ENCODE measurements at regions of chr1 and their contacts with region 1.

Region 1: DNA sequence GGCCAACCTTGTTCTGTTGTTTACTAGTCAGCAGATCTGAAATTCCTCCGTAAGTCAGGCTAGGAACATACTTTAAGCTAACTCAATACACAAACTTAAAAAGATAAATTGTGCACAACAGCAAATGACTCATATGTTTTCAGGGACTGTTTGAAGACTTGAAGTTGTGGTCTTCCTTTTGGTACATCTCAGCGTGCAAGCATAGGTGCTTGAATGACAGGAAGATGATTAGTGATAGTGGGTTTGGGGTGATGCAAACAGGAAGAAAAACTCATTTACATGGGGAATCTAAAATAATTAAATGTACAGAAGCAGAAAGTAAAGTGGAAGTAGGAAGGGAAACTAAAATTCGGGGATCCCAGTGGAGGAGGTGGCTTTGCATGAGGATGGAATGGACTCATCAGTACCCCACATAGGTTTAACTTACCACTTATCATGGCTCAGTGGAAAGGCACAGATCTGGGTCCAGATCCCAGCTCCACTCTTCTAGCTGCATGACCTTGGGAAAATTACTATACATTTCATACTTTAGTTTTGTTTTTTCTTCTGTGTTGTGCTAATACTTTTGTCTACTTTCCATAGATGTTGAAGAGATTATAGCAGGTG is 122.3 kb downstream of the XCL2 start:
- DNase-seq: peak; percentile 76
- H3K4me3 Mint-ChIP-seq: peak overlapping the region; percentile 44
- H3K27ac Mint-ChIP-seq: peak overlapping the region; percentile 52
- H3K4me1 Mint-ChIP-seq: peaks cover 15% of the 10 kb centered on the region
- H3K27me3 Mint-ChIP-seq: peaks cover 3% of the 10 kb centered on the region

Region 2: DNA sequence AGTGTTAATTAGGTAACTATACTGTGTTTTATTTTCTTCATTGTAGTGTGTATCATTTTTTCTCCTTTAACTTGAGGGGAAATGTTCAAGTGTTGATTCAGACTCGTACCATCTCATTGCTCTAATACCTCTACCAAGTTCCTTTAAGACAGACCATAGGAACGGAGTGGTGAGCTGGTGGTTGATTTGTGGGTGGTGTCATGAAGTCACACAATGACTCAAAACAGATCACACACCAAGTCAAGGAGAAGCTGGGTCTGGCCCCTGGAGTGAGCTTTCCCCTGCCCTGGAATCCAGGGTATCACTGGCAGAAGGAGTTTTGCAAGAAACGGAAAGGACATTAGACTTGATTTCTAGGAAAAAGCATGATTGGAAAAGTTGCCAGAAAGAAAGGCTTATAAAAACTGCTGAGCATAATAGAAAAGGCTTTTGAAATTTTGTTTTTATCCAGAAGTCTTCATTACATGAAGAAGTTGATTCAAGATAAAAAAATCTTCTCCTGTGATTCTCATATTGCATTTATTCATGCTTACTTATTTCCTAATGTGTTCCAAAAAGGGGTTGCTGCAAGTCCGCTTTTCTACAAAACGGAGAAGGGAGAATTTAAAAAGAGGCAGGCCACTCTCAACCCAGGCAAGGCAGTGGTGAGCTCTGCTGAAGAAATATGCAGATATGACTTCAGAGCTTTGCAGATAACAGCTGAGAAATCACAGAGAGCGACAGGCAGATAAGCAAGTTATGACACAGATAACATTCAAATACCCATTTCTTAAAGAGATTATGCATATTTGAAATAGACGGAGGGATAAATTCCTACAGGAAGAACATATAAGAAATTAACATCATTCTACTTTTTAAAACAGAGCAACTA is 61.1 kb before region 1 on chr1:
- intact Hi-C with region 1: loop called (anchors 5 kb)
- DNase-seq: peak; percentile 75
- H3K4me3 Mint-ChIP-seq: peak overlapping the region; percentile 3
- H3K27ac Mint-ChIP-seq: peak overlapping the region; percentile 46
- H3K4me1 Mint-ChIP-seq: peaks cover 29% of the 10 kb centered on the region
- H3K27me3 Mint-ChIP-seq: peaks cover 12% of the 10 kb centered on the region

Region 3: GRCh38 chr1:168623003-168623828 is 201.7 kb after region 1 on chr1:
- intact Hi-C with region 1: no loop called
- DNase-seq: no peak
- H3K4me3 Mint-ChIP-seq: no peak overlapping the region
- H3K27ac Mint-ChIP-seq: no peak overlapping the region
- H3K4me1 Mint-ChIP-seq: no peaks in the 10 kb centered on the region
- H3K27me3 Mint-ChIP-seq: peaks cover 22% of the 10 kb centered on the region

Measured in activated CD4-positive, alpha-beta T cell treated with anti-CD3 and anti-CD28 coated beads, Interleukin-2, amount 10 ng/mL, durations not matched to agents 24 days and 14 days (primary cell).